ENCODE measurements at regions of chr22 and their contacts with region 1.

Region 1: DNA sequence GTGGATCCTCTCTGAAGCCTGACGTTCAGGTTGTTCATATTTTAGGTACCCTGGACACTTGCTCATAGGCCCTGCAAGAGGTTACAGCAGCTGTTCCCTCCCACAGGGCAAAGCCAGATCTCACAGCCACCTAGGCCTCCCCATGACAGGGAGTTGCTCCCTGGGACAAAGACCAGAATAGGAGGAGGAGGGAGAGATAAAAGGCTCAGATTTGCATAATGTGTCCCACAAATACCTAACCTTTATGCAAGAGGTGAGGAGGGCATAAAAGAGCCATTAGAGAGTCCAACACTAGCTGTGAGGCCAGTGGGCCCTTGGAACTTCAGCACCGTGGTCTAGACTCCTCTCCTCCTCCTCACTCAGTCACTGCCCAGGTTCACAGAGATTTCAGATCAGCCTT is 33.8 kb downstream of the ZNF280B start:
- DNase-seq: no peak
- H3K4me3 ChIP-seq: no peak overlapping the region
- H3K4me3 Mint-ChIP-seq: no peak overlapping the region
- H3K27ac ChIP-seq: no peak overlapping the region
- H3K27ac Mint-ChIP-seq: no peak overlapping the region
- H3K4me1 ChIP-seq: no peaks in the 10 kb centered on the region
- H3K4me1 Mint-ChIP-seq: no peaks in the 10 kb centered on the region
- H3K27me3 ChIP-seq: no peaks in the 10 kb centered on the region
- H3K27me3 Mint-ChIP-seq: peaks cover 3 to 17% of the 10 kb centered on the region in 2 donors

Region 2: DNA sequence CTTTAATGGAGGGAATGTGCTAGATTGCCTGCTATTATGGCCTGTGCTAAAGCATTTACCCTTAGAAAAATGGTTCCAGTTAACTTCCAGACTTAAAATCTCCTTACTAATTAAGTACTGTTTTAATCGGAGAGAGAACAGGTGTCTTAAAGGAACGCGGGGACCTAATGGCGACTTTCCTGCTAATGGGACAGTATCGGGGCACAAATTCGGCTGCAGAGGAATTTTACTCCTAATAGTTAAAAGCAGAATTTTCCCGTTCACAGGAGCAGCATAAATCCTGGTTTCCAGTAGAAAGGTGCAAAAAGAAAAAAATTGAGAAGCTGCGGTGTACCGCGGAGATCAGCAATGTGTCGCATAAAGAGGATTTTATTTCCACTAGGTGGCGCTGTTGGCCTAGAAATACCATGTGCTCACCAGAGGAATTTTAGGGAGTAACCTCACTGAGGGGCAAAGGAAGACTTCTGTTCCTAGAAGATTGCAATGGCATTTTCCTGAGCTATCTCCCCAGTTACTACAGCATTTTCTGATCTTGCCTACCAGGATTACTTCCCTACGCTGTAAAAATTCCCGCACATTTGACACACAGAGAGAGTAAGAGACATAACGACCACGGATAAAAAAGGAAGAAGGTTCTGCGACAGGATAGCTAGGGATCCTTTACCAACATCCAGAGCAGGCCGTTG is 10.7 kb before region 1 on chr22:
- CTCF ChIA-PET with region 1: interaction called, 12 read pairs
- POLR2A ChIA-PET with region 1: no interaction called
- DNase-seq: peak; percentile 5 to 61 (median 31)
- H3K4me3 ChIP-seq: no peak overlapping the region
- H3K4me3 Mint-ChIP-seq: no peak overlapping the region
- H3K27ac ChIP-seq: no peak overlapping the region
- H3K27ac Mint-ChIP-seq: no peak overlapping the region
- H3K4me1 ChIP-seq: no peaks in the 10 kb centered on the region
- H3K4me1 Mint-ChIP-seq: no peaks in the 10 kb centered on the region
- H3K27me3 ChIP-seq: peaks cover 7% of the 10 kb centered on the region
- H3K27me3 Mint-ChIP-seq: peaks cover 31 to 55% of the 10 kb centered on the region in 2 donors

Region 3: GRCh38 chr22:22487869-22488597 is 13.3 kb after region 1 on chr22:
- CTCF ChIA-PET with region 1: no interaction called
- POLR2A ChIA-PET with region 1: no interaction called
- DNase-seq: no peak
- H3K4me3 ChIP-seq: no peak overlapping the region
- H3K4me3 Mint-ChIP-seq: no peak overlapping the region
- H3K27ac ChIP-seq: no peak overlapping the region
- H3K27ac Mint-ChIP-seq: no peak overlapping the region
- H3K4me1 ChIP-seq: no peaks in the 10 kb centered on the region
- H3K4me1 Mint-ChIP-seq: no peaks in the 10 kb centered on the region
- H3K27me3 ChIP-seq: no peaks in the 10 kb centered on the region
- H3K27me3 Mint-ChIP-seq: no peaks in the 10 kb centered on the region